ENCODE measurements at regions of chr17 and their contacts with region 1.

Region 1: GRCh38 chr17:80817321-80818251 is 174.1 kb upstream of the CHMP6 start:
- DNase-seq: no peak
- ATAC-seq: no peak
- H3K4me3 ChIP-seq: no peak overlapping the region
- H3K27ac ChIP-seq: no peak overlapping the region
- H3K4me1 ChIP-seq: no peaks in the 10 kb centered on the region
- H3K27me3 ChIP-seq: no peaks in the 10 kb centered on the region
- CTCF ChIP-seq: no peak

Region 2: DNA sequence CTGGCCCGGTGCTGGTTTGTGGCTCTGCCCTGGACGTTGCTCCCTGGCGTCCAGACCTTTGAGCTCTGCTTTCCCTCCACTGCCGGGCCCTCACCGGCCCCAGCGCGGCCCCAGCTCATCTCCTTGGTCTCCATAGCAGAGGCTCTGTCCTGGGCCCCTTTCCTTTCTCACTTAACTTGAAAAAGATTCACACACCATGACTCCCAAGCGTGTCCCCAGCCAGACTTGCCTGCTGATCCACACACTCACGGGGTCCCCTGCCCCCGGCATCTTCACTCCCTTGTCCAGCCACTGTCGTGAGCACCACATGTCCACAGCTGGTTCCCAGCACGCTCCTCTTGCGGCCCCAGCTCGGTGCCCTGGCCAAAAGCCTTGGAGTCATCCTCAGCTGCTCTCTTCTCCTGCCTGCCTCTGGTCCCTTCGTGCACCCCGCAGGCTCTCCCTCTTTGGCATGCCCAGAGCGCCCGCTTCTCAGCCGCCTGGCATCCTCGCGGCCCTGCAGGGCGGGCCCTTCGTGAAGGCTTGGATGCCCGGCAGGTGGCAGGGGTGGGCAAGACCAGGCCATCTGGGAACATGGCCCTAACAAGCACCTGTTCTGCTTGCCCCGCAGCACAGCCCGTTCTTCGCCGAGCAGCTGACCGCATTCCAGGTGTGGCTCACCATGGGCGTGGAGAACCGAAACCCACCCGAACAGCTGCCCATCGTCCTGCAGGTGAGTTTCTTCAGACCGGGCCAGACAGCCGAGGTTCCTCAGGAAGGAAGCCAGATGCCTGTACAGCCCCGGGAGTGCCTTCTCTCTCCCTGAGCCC is 28.5 kb after region 1 on chr17:
- CTCF ChIA-PET with region 1: no interaction called
- POLR2A ChIA-PET with region 1: interaction called, 10 read pairs
- in situ Hi-C with region 1: no loop called
- intact Hi-C with region 1: no loop called
- DNase-seq: no peak
- ATAC-seq: no peak
- H3K4me3 ChIP-seq: no peak overlapping the region
- H3K27ac ChIP-seq: no peak overlapping the region
- H3K4me1 ChIP-seq: no peaks in the 10 kb centered on the region
- H3K27me3 ChIP-seq: no peaks in the 10 kb centered on the region
- CTCF ChIP-seq: no peak